Activated CD4-positive, alpha-beta T cell treated with anti-CD3 and anti-CD28 coated beads for 36 hours (primary cell): ENCODE measurements at regions of chr3 and their contacts with region 1.

Region 1: DNA sequence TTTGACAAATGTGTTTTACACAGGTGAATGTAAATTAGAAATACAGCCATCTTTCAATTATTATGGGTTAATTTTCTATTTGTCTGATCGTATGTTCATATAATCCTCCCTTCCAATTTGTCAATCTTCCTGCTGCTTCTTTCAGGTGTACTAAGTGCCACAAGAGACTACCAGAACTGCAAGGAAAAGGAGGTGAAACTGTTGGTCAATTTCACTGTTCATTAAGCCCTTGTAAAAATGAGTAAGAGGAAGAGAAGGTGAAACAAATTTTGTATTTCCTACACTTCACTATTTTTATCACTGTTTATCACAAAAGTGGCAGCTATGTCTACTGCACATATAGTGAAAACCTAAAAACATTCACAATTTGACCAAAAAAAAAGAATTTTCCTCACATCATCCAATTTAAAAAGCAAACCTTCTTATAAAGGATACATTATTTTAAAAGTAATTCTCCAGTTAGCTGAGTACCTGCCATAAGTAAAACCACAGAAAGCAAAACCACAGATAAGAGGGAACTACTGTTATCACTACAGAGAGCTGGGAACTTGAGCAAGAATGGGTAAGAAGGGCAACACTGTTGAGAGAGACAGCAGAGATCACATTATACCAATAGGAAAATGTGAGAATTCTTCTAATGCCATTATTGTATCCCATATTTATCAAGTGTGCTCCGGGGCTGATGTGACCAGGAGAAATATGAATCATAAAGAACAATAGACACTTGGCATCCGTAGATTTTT is 163.0 kb downstream of the TBC1D5 start:
- DNase-seq: no peak
- ATAC-seq: peak; percentile 91
- H3K4me3 Mint-ChIP-seq: no peak overlapping the region
- H3K27ac Mint-ChIP-seq: no peak overlapping the region
- H3K4me1 Mint-ChIP-seq: peaks cover 6% of the 10 kb centered on the region
- H3K27me3 Mint-ChIP-seq: no peaks in the 10 kb centered on the region

Region 2: DNA sequence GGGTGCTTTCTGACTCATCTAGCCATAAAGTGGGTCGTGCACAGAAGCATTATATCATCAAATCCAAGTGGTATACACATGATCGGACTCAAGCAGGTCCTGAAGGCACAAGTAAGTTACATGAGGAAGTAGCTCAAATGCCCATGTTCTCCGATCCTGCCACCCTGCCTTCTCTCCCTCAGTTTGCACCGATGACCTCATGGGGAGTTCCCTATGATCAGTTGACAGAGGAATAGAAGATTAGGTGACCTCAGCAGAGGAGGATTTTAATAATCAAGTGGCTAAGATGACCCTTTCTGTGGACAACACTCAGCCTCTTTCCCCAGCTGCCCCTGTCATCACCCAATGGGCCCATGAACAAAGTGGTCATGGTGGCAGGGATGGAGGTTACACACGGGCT is 13.5 kb after region 1 on chr3:
- CTCF ChIA-PET with region 1: interaction called, 5 read pairs
- POLR2A ChIA-PET with region 1: interaction called, 11 read pairs
- intact Hi-C with region 1: no loop called
- DNase-seq: no peak
- ATAC-seq: no peak
- H3K4me3 Mint-ChIP-seq: no peak overlapping the region
- H3K27ac Mint-ChIP-seq: no peak overlapping the region
- H3K4me1 Mint-ChIP-seq: no peaks in the 10 kb centered on the region
- H3K27me3 Mint-ChIP-seq: no peaks in the 10 kb centered on the region